ENCODE measurements at regions of chr3 and their contacts with region 1.

Region 1: DNA sequence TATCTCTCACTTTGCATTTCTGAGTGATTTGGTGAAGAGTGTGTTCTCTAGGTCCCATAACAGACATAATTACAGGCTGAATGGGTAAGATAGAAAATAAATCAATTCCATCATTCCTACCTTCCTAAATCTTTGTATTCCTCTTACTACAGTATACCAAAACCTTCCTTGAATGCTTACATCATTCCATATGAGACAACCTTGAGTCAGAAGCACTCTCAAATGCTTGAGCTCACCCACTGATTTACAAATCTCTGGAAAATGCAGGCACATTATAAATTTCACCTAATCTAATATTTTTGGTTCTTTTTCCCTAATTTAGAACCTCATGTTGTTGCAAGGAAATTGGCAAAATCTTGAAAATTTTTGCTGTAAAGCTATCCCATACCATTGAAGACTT is 239.1 kb downstream of the CBLB start:
- DNase-seq: no peak

Region 2: DNA sequence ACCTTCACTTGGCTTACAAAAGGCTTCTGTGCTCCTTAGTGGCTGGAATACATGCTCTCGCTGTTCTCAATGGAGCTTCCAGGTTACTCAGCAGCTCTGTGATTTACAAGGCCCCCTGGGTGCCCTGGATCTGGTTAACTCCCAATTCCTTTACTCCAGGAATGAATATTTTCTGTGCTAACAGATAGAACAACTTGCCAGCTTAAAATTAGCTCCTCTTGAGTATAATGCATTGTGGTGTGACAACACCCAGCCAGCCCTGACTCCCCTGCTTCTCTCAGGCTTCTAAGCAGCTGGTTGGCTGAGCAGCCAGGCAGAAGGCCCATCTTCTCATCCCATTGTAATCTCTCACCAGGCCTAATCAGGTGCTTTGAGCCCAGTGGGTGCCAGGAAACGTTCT is 16.6 kb before region 1 on chr3:
- intact Hi-C with region 1: no loop called
- DNase-seq: no peak

Region 3: DNA sequence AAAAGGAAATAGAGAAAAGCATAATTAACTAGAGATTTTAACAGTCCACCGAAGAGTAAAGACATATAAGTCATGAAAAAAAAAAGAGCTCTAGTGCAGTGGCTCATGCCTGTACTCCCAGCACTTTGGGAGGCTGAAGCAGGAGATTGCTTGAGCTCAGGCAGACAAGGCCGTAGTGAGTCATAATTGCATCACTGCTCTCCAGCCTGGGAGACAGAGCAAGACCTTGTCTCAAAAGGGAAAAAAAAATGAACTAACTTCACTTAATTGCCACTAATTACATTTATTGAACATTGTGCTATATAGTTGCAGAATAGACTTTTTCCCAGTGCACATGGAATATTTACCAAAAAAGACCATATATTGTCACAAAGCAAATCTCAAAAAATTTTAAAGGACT is 17.3 kb after region 1 on chr3:
- intact Hi-C with region 1: no loop called
- DNase-seq: no peak

Region 4: GRCh38 chr3:105661461-105661860 is 31.7 kb after region 1 on chr3:
- intact Hi-C with region 1: loop called in 1 of 2 experiments (anchors 2 kb)
- DNase-seq: no peak

Measured in posterior vena cava (tissue), 2 donors.